Naive thymus-derived CD4-positive, alpha-beta T cell (primary cell): ENCODE measurements at regions of chr12 and their contacts with region 1.

Region 1: GRCh38 chr12:6833189-6833890 is 5.1 kb downstream of the P3H3 start:
- DNase-seq: no peak
- ATAC-seq: no peak
- H3K4me3 ChIP-seq: no peak overlapping the region
- H3K4me3 Mint-ChIP-seq: no peak overlapping the region
- H3K27ac ChIP-seq: no peak overlapping the region
- H3K27ac Mint-ChIP-seq: no peak overlapping the region
- H3K4me1 ChIP-seq: peaks cover 0 to 4% of the 10 kb centered on the region in 2 donors
- H3K4me1 Mint-ChIP-seq: peaks cover 0 to 16% (median 12%) of the 10 kb centered on the region in 7 donors
- H3K27me3 ChIP-seq: peaks cover 0 to 4% of the 10 kb centered on the region in 2 donors
- H3K27me3 Mint-ChIP-seq: peaks cover 0 to 32% (median 0%) of the 10 kb centered on the region in 5 donors

Region 2: GRCh38 chr12:6735448-6736191 is 97.7 kb before region 1 on chr12:
- CTCF ChIA-PET with region 1: interaction called, 5 read pairs
- POLR2A ChIA-PET with region 1: no interaction called
- intact Hi-C with region 1: loop called in 1 of 2 experiments (anchors 1 kb)
- DNase-seq: peak in 4 of 9 donors; percentile 23 to 39 (median 29)
- ATAC-seq: peak; percentile 81
- H3K4me3 ChIP-seq: no peak overlapping the region
- H3K4me3 Mint-ChIP-seq: no peak overlapping the region
- H3K27ac ChIP-seq: no peak overlapping the region
- H3K27ac Mint-ChIP-seq: peak overlapping the region in 1 of 9 donors; percentile 43
- H3K4me1 ChIP-seq: no peaks in the 10 kb centered on the region
- H3K4me1 Mint-ChIP-seq: peaks cover 0 to 10% (median 5%) of the 10 kb centered on the region in 7 donors
- H3K27me3 ChIP-seq: no peaks in the 10 kb centered on the region
- H3K27me3 Mint-ChIP-seq: no peaks in the 10 kb centered on the region

Region 3: GRCh38 chr12:6914246-6914946 is 81.1 kb after region 1 on chr12 and contains the start of gene ENO2:
- CTCF ChIA-PET with region 1: no interaction called
- POLR2A ChIA-PET with region 1: no interaction called
- intact Hi-C with region 1: no loop called
- DNase-seq: peak; percentile 68 to 90 (median 81)
- ATAC-seq: peak; percentile 96
- H3K4me3 ChIP-seq: peak within 1 kb of the TSS; percentile 79
- H3K4me3 Mint-ChIP-seq: peak within 1 kb of the TSS; percentile 88 to 100 (median 96)
- H3K27ac ChIP-seq: peak within 1 kb of the TSS; percentile 86
- H3K27ac Mint-ChIP-seq: peak within 1 kb of the TSS; percentile 86 to 99 (median 93)
- H3K4me1 ChIP-seq: peaks cover 11 to 14% of the 10 kb centered on the region in 2 donors
- H3K4me1 Mint-ChIP-seq: peaks cover 0 to 53% (median 36%) of the 10 kb centered on the region in 7 donors
- H3K27me3 ChIP-seq: no peaks in the 10 kb centered on the region
- H3K27me3 Mint-ChIP-seq: peaks cover 0 to 4% (median 0%) of the 10 kb centered on the region in 5 donors
- total RNA-seq, gene ENO2: 65.3 to 193 (median 178) TPM